Activated naive CD4-positive, alpha-beta T cell treated with anti-CD3 and anti-CD28 coated beads for 36 hours (primary cell): ENCODE measurements at regions of chr6 and their contacts with region 1.

Region 1: DNA sequence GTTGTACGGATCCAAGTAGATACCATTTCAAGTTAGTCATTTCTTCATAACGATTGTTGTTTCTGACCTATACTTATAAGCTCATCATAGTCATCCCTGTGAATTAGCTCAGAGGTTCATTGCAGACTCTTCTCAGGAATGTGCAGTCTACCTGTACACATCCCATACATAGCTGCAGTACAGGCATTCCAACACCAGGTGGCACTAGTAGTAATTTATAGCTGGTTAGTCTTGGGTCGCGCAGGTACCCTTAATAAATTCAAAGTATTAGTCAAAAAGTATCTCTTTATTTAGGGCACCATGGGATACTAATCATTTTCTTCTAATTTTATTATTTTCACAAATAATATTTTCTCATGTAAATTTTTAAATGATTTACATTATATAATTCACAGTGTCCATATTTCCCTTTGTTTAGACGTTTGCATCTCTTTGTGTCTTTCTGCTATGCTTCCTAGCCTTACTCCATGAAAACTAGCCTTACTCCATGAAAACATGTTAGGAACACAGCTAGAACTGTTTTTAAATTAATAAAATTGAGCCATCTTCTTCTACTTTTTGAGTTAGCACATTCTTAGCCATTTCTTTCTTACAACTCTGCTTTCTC is 128.6 kb upstream of the FAM83B start:
- DNase-seq: peak; percentile 75
- H3K4me3 Mint-ChIP-seq: no peak overlapping the region
- H3K27ac Mint-ChIP-seq: no peak overlapping the region
- H3K4me1 Mint-ChIP-seq: no peaks in the 10 kb centered on the region
- H3K27me3 Mint-ChIP-seq: no peaks in the 10 kb centered on the region

Region 2: GRCh38 chr6:54541541-54541940 is 176.4 kb before region 1 on chr6:
- CTCF ChIA-PET with region 1: no interaction called
- intact Hi-C with region 1: no loop called
- DNase-seq: no peak
- H3K4me3 Mint-ChIP-seq: no peak overlapping the region
- H3K27ac Mint-ChIP-seq: no peak overlapping the region
- H3K4me1 Mint-ChIP-seq: no peaks in the 10 kb centered on the region
- H3K27me3 Mint-ChIP-seq: no peaks in the 10 kb centered on the region

Region 3: DNA sequence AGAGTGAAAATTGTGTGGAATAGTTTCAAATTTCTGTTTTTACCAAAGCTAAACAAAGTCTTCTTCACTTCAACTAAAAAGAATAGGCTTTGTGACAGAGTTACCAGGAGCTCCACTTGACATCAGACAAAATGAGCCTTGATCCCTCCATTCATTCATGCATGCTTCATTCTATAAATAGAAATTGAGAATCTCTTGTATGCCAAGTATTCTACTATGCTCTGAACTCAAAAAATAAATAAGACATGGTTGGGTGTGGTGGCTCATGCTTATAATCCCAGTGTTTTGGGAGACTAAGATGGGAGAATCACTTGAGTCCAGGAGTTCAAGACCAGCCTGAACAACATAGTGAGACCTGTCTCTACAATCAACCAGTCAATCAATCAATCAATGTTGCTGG is 108.0 kb before region 1 on chr6:
- CTCF ChIA-PET with region 1: no interaction called
- intact Hi-C with region 1: no loop called
- DNase-seq: no peak
- H3K4me3 Mint-ChIP-seq: no peak overlapping the region
- H3K27ac Mint-ChIP-seq: no peak overlapping the region
- H3K4me1 Mint-ChIP-seq: no peaks in the 10 kb centered on the region
- H3K27me3 Mint-ChIP-seq: no peaks in the 10 kb centered on the region

Region 4: DNA sequence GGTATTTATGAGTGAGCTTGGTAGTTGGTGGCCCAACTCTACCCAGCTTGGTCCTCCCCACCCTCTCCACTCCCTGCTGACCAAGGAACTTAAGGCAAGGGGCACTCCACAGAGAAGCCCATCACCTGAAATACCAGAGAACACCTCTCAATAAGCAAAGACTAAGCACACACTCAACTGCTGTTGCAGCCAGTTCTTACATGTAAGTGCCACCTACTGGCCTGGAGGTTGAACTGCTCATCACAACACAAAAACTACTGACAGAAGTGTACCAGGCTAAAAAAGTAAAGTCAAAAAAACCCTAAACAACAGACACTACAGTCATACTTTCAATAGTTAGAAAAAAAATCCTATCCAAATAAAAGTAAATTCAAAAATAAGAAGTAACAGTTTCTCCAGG is 274.8 kb after region 1 on chr6:
- CTCF ChIA-PET with region 1: no interaction called
- intact Hi-C with region 1: loop called (anchors 2 kb)
- DNase-seq: no peak
- H3K4me3 Mint-ChIP-seq: no peak overlapping the region
- H3K27ac Mint-ChIP-seq: no peak overlapping the region
- H3K4me1 Mint-ChIP-seq: no peaks in the 10 kb centered on the region
- H3K27me3 Mint-ChIP-seq: no peaks in the 10 kb centered on the region

Region 5: GRCh38 chr6:55069132-55069781 is 351.3 kb after region 1 on chr6:
- CTCF ChIA-PET with region 1: interaction called, 5 read pairs
- intact Hi-C with region 1: loop called (anchors 2 kb)
- DNase-seq: peak; percentile 6
- H3K4me3 Mint-ChIP-seq: no peak overlapping the region
- H3K27ac Mint-ChIP-seq: no peak overlapping the region
- H3K4me1 Mint-ChIP-seq: no peaks in the 10 kb centered on the region
- H3K27me3 Mint-ChIP-seq: no peaks in the 10 kb centered on the region

Region 6: GRCh38 chr6:55239099-55239498 is 521.1 kb after region 1 on chr6:
- CTCF ChIA-PET with region 1: no interaction called
- intact Hi-C with region 1: loop called (anchors 1 kb)
- DNase-seq: no peak
- H3K4me3 Mint-ChIP-seq: no peak overlapping the region
- H3K27ac Mint-ChIP-seq: no peak overlapping the region
- H3K4me1 Mint-ChIP-seq: no peaks in the 10 kb centered on the region
- H3K27me3 Mint-ChIP-seq: no peaks in the 10 kb centered on the region